ENCODE measurements at regions of chr1 and their contacts with region 1.

Region 1: GRCh38 chr1:201481761-201482493 is 12.9 kb upstream of the PHLDA3 start:
- DNase-seq: peak; percentile 87 to 92
- H3K4me3 ChIP-seq: peak overlapping the region; percentile 15
- H3K4me3 Mint-ChIP-seq: peak overlapping the region; percentile 68
- H3K27ac Mint-ChIP-seq: no peak overlapping the region
- H3K4me1 ChIP-seq: peaks cover 15% of the 10 kb centered on the region; the same call in 1 of the 2 replicates
- H3K4me1 Mint-ChIP-seq: peaks cover 4% of the 10 kb centered on the region
- H3K27me3 ChIP-seq: no peaks in the 10 kb centered on the region
- H3K27me3 Mint-ChIP-seq: no peaks in the 10 kb centered on the region
- CTCF ChIP-seq: peak; percentile 83 to 87

Region 2: GRCh38 chr1:200992382-200993048 is 489.4 kb before region 1 on chr1:
- CTCF ChIA-PET with region 1: no interaction called
- POLR2A ChIA-PET with region 1: no interaction called
- intact Hi-C with region 1: no loop called
- DNase-seq: no peak
- H3K4me3 ChIP-seq: no peak overlapping the region
- H3K4me3 Mint-ChIP-seq: no peak overlapping the region
- H3K27ac Mint-ChIP-seq: no peak overlapping the region
- H3K4me1 ChIP-seq: no peaks in the 10 kb centered on the region
- H3K4me1 Mint-ChIP-seq: no peaks in the 10 kb centered on the region
- H3K27me3 ChIP-seq: no peaks in the 10 kb centered on the region
- H3K27me3 Mint-ChIP-seq: no peaks in the 10 kb centered on the region
- CTCF ChIP-seq: no peak

Region 3: GRCh38 chr1:201436393-201436792 is 45.5 kb before region 1 on chr1:
- CTCF ChIA-PET with region 1: interaction called, 52 read pairs
- POLR2A ChIA-PET with region 1: interaction called, 7 read pairs
- intact Hi-C with region 1: loop called (anchors 1 kb)
- DNase-seq: peak; percentile 66 to 72
- H3K4me3 ChIP-seq: no peak overlapping the region
- H3K4me3 Mint-ChIP-seq: no peak overlapping the region
- H3K27ac Mint-ChIP-seq: no peak overlapping the region
- H3K4me1 ChIP-seq: no peaks in the 10 kb centered on the region
- H3K4me1 Mint-ChIP-seq: peaks cover 6% of the 10 kb centered on the region
- H3K27me3 ChIP-seq: no peaks in the 10 kb centered on the region
- H3K27me3 Mint-ChIP-seq: peaks cover 3% of the 10 kb centered on the region
- CTCF ChIP-seq: peak in 1 of 2 experiments; percentile 44

Region 4: DNA sequence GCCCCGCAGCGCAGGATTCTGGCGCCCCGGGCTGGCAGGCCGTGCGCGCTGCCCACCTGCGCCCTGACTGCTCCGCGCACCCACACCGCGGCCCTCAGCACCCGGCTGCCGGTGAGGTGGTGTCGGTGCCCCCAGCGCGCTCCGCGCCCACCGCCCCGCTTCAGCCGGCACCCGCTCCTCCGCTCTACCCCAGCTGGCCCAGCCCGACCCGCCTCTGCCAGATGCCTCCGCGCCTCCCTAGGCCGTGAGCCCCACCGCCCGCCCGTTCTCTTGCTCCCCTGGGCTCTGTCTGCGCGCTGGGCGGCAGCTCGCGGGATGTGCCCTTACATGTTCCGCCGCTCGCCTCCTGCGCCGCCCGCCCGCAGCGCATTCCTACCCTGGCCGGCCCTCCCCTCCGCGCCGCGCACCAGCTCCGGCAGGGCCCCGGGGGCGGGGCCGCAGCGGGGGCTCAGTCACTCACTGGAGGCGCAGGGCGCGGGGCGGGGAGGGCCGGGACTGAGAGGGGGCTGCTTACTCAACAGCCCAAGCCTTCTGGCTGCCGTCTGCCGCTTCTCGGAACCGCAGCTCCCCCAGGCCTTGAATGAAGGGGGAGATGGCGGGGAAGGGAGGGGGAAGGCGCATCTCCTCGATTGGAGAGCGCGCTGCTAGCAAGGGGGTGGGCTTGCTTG is 12.9 kb before region 1 on chr1 and contains the start of gene PHLDA3:
- CTCF ChIA-PET with region 1: interaction called, 27 read pairs
- POLR2A ChIA-PET with region 1: interaction called, 4 read pairs
- intact Hi-C with region 1: no loop called
- DNase-seq: peak; percentile 83 to 87
- H3K4me3 ChIP-seq: peak within 1 kb of the TSS; percentile 65
- H3K4me3 Mint-ChIP-seq: peak within 1 kb of the TSS; percentile 84
- H3K27ac Mint-ChIP-seq: peak within 1 kb of the TSS; percentile 41
- H3K4me1 ChIP-seq: peaks cover 13% of the 10 kb centered on the region
- H3K4me1 Mint-ChIP-seq: no peaks in the 10 kb centered on the region
- H3K27me3 ChIP-seq: no peaks in the 10 kb centered on the region
- H3K27me3 Mint-ChIP-seq: no peaks in the 10 kb centered on the region
- CTCF ChIP-seq: no peak
- total RNA-seq, gene PHLDA3: 6.5 and 10.5 TPM in 2 replicates

Region 5: GRCh38 chr1:201500670-201501120 is 18.8 kb after region 1 on chr1:
- CTCF ChIA-PET with region 1: interaction called, 46 read pairs
- POLR2A ChIA-PET with region 1: interaction called, 20 read pairs
- intact Hi-C with region 1: no loop called
- DNase-seq: no peak
- H3K4me3 ChIP-seq: no peak overlapping the region
- H3K4me3 Mint-ChIP-seq: no peak overlapping the region
- H3K27ac Mint-ChIP-seq: peak overlapping the region; percentile 28
- H3K4me1 ChIP-seq: peaks cover 55% of the 10 kb centered on the region
- H3K4me1 Mint-ChIP-seq: peaks cover 33% of the 10 kb centered on the region
- H3K27me3 ChIP-seq: no peaks in the 10 kb centered on the region
- H3K27me3 Mint-ChIP-seq: no peaks in the 10 kb centered on the region
- CTCF ChIP-seq: no peak

Region 6: GRCh38 chr1:201511941-201512539 is 30.1 kb after region 1 on chr1:
- CTCF ChIA-PET with region 1: interaction called, 198 read pairs
- POLR2A ChIA-PET with region 1: interaction called, 5 read pairs
- intact Hi-C with region 1: loop called (anchors 1 kb)
- DNase-seq: no peak
- H3K4me3 ChIP-seq: no peak overlapping the region
- H3K4me3 Mint-ChIP-seq: no peak overlapping the region
- H3K27ac Mint-ChIP-seq: no peak overlapping the region
- H3K4me1 ChIP-seq: peaks cover 57% of the 10 kb centered on the region
- H3K4me1 Mint-ChIP-seq: peaks cover 43% of the 10 kb centered on the region
- H3K27me3 ChIP-seq: no peaks in the 10 kb centered on the region
- H3K27me3 Mint-ChIP-seq: no peaks in the 10 kb centered on the region
- CTCF ChIP-seq: no peak